ENCODE measurements at regions of chr16 and their contacts with region 1.

Region 1: GRCh38 chr16:50152807-50153452 is at the start of gene TENT4B:
- DNase-seq: peak; percentile 86 to 95
- ATAC-seq: peak; percentile 74 to 89 (median 80)
- H3K4me3 ChIP-seq: peak within 1 kb of the TSS; percentile 57
- H3K4me3 Mint-ChIP-seq: peak within 1 kb of the TSS; percentile 90
- H3K27ac ChIP-seq: peak within 1 kb of the TSS; percentile 90
- H3K27ac Mint-ChIP-seq: peak within 1 kb of the TSS; percentile 86 to 89
- H3K4me1 ChIP-seq: peaks cover 31% of the 10 kb centered on the region
- H3K4me1 Mint-ChIP-seq: peaks cover 27 to 31% of the 10 kb centered on the region in 2 donors
- H3K27me3 ChIP-seq: no peaks in the 10 kb centered on the region
- H3K27me3 Mint-ChIP-seq: no peaks in the 10 kb centered on the region
- CTCF ChIP-seq: no peak
- total RNA-seq, gene TENT4B: 37.5 to 48.7 (median 44.4) TPM

Region 2: DNA sequence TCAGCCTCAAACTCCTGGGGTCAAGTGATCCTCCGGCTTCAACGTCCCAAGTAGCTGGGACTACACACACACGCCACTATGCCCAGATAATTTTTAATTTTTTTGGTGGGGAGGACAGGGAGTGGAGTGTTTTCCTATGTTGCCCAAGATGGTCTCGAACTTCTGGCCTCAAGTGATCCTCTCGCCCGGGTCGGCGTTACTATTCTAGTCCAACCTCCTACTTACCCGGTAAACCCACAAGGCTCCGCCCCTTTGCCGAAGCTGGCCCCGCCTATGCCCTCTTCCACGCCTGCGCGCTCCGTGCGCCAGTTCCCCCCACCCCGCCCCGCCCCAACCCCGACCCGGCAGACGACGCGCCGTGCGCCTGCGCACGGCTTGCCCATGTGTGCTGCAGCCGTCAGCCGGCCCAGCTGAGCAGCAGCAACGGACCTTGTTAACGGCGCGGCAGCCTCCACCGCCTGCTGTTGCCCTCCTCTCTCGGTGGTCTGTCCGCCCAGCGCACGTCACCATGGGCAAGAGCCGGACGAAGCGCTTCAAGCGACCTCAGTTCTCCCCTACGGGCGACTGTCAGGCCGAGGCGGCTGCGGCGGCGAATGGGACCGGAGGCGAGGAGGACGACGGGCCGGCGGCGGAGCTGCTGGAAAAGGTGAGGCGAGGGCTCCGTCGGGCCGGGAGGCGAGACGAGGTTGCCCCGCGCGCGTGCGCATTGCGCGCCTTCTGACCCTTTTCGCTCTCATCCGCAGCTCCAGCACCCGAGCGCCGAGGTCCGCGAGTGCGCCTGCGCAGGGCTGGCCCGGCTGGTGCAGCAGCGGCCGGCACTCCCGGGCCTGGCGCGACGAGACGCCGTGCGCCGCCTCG is 87.1 kb before region 1 on chr16 and contains the start of gene HEATR3:
- intact Hi-C with region 1: loop called (anchors 2 kb)
- DNase-seq: peak; percentile 92 to 96
- ATAC-seq: peak; percentile 85 to 92 (median 87)
- H3K4me3 ChIP-seq: peak within 1 kb of the TSS; percentile 69
- H3K4me3 Mint-ChIP-seq: peak within 1 kb of the TSS; percentile 95
- H3K27ac ChIP-seq: peak within 1 kb of the TSS; percentile 69
- H3K27ac Mint-ChIP-seq: peak within 1 kb of the TSS; percentile 84
- H3K4me1 ChIP-seq: peaks cover 21% of the 10 kb centered on the region
- H3K4me1 Mint-ChIP-seq: peaks cover 24 to 38% of the 10 kb centered on the region in 2 donors
- H3K27me3 ChIP-seq: no peaks in the 10 kb centered on the region
- H3K27me3 Mint-ChIP-seq: no peaks in the 10 kb centered on the region
- CTCF ChIP-seq: no peak
- total RNA-seq, gene HEATR3: 14.6 to 25.0 (median 21.4) TPM

Region 3: GRCh38 chr16:50266337-50267091 is 113.6 kb after region 1 on chr16 and contains the start of gene ADCY7:
- intact Hi-C with region 1: loop called (anchors 5 kb)
- DNase-seq: peak; percentile 82 to 87
- ATAC-seq: peak; percentile 79 to 86 (median 85)
- H3K4me3 ChIP-seq: peak within 1 kb of the TSS; percentile 75
- H3K4me3 Mint-ChIP-seq: peak within 1 kb of the TSS; percentile 88
- H3K27ac ChIP-seq: peak within 1 kb of the TSS; percentile 72
- H3K27ac Mint-ChIP-seq: peak within 1 kb of the TSS; percentile 91 to 99
- H3K4me1 ChIP-seq: peaks cover 87% of the 10 kb centered on the region
- H3K4me1 Mint-ChIP-seq: peaks cover 86 to 95% of the 10 kb centered on the region in 2 donors
- H3K27me3 ChIP-seq: no peaks in the 10 kb centered on the region
- H3K27me3 Mint-ChIP-seq: no peaks in the 10 kb centered on the region
- CTCF ChIP-seq: no peak
- total RNA-seq, gene ADCY7: 479 to 591 (median 512) TPM

Region 4: DNA sequence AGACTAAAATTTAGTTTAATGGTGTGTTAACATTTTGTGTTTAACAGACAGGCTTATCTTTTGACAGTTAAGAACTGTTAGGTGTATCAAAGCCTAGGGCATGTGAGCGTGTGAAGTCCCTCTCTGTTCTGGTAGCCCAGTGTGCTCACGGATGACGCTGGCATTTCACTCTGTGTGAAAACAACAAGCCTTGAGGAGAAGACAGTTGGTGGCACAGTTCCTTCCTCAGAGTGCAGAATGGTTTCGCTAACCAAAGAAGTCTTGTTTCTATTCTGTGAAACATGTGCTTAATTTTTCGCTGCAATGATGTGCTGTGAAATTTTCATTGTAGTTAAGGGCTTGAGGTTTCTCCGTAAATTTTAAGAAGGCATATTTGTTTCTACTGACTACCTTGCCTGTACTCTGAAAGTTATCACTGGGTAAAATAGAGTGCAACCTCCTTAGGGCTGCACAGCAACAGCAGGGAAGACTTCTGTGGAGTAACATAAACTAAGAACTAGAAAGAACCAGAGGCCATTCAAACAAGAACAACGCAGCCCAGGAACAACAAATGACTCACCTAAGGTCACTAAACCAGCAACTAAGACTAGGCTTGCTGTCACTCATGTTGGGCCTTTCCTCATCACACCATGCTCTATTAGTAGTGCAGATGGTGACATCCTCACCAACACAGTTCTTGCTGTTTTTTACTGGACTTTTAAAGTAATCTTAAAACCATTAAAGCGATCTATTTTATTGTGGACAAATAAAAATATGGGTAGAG is 182.4 kb after region 1 on chr16:
- intact Hi-C with region 1: loop called (anchors 5 kb)
- DNase-seq: peak; percentile 58 to 64
- ATAC-seq: peak; percentile 80 to 94 (median 92)
- H3K4me3 ChIP-seq: no peak overlapping the region
- H3K4me3 Mint-ChIP-seq: peak overlapping the region; percentile 74
- H3K27ac ChIP-seq: peak overlapping the region; percentile 99
- H3K27ac Mint-ChIP-seq: peak overlapping the region; percentile 90 to 98
- H3K4me1 ChIP-seq: peaks cover 10% of the 10 kb centered on the region
- H3K4me1 Mint-ChIP-seq: peaks cover 42 to 45% of the 10 kb centered on the region in 2 donors
- H3K27me3 ChIP-seq: no peaks in the 10 kb centered on the region
- H3K27me3 Mint-ChIP-seq: no peaks in the 10 kb centered on the region
- CTCF ChIP-seq: no peak

Measured in natural killer cell (primary cell).